ENCODE measurements at regions of chr15 and their contacts with region 1.

Region 1: DNA sequence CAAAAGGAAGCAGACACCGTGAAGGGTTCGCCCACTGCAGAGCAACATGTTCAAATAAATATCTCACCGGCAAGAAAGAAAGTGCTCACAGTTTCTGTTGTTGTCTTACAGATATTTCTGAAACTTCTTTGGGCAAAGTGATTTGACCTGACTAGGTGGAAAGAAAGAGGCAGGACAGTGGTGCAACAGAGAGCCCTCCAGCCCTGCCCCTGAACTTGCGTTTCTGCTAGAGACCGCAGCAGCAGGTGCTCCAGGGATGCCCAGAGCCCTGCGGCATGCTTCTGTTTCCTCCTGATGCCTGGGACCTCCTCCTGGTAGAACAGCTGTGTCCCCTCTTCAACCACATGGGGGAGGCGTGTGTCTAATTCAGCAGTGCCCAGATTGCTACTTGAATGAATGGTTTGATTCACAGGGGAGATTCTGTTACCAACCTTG is 123.4 kb downstream of the ATP10A start:
- DNase-seq: no peak
- H3K4me3 ChIP-seq: no peak overlapping the region
- H3K27ac ChIP-seq: no peak overlapping the region
- H3K4me1 ChIP-seq: no peaks in the 10 kb centered on the region
- H3K27me3 ChIP-seq: no peaks in the 10 kb centered on the region
- CTCF ChIP-seq: no peak

Region 2: DNA sequence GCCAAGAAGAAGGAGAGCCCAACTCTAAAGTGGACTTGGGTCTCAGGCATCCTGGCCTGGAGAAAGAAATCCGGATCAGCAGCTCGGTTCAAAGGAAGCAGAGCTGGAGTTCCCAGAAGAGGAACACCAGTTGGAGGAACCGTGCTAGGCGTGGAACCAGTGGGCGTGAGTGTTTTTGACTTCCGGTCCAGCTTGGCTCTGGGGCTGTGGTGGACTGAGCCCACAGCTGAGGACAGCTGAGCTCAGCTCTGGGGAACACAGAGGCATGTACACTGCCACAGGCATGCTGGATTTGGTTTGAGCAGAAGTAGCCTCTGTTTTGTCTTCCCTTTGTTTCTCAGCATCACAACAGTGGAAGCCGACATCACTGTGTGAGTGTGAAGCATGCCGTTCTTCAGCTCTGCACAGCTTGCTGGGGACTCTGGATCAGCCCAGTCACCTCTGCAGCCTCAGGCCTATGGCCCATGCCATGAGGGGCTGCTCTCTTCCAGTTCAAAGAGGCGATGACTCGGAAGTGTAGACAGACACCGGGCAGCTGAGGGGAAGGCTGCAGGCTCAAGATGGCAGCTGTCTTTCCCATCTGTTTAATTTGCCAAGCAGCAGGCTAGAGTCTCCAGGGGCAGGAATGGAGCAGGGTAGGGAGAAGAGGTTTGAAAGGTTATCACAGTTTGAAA is 115.1 kb before region 1 on chr15:
- CTCF ChIA-PET with region 1: no interaction called
- dilution Hi-C with region 1: no loop called
- in situ Hi-C with region 1: loop called in 1 of 2 experiments (anchors 25 kb)
- intact Hi-C with region 1: no loop called
- DNase-seq: no peak
- H3K4me3 ChIP-seq: no peak overlapping the region
- H3K27ac ChIP-seq: no peak overlapping the region
- H3K4me1 ChIP-seq: no peaks in the 10 kb centered on the region
- H3K27me3 ChIP-seq: no peaks in the 10 kb centered on the region
- CTCF ChIP-seq: no peak

Region 3: DNA sequence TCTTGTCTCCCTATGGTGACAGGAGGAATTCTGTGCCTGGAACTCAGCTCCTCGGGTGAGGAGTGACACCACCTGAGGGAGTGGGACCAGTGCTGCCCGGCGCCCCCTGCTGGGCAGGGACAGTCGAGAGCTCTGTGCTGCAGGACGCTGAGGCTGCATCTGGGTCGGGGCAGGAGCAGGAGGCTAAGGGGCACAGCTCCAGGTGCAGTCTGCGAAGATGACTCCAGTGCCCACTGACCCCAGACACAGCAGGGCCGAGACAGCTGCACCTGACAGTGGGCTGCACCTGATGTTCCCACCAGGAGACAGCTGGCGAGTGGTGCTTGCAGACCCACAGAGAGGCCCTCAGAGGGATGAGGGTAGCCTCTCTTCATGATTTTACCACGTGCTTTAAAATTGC is 29.5 kb before region 1 on chr15:
- CTCF ChIA-PET with region 1: no interaction called
- dilution Hi-C with region 1: no loop called
- in situ Hi-C with region 1: no loop called
- intact Hi-C with region 1: no loop called
- DNase-seq: no peak
- H3K4me3 ChIP-seq: no peak overlapping the region
- H3K27ac ChIP-seq: no peak overlapping the region
- H3K4me1 ChIP-seq: no peaks in the 10 kb centered on the region
- H3K27me3 ChIP-seq: no peaks in the 10 kb centered on the region
- CTCF ChIP-seq: no peak